ENCODE measurements at regions of chr2 and their contacts with region 1.

Region 1: GRCh38 chr2:113282747-113283533 is 4.2 kb upstream of the PAX8 start:
- DNase-seq: peak; percentile 24
- ATAC-seq: peak; percentile 3; the same call in 1 of the 2 replicates
- H3K4me3 ChIP-seq: no peak overlapping the region
- H3K27ac ChIP-seq: peak overlapping the region; percentile 85
- H3K4me1 ChIP-seq: peaks cover 38% of the 10 kb centered on the region
- H3K27me3 ChIP-seq: no peaks in the 10 kb centered on the region
- CTCF ChIP-seq: peak; percentile 42; the same call in 1 of the 2 replicates

Region 2: GRCh38 chr2:113351375-113352355 is 68.7 kb after region 1 on chr2:
- CTCF ChIA-PET with region 1: no interaction called
- POLR2A ChIA-PET with region 1: no interaction called
- intact Hi-C with region 1: loop called (anchors 10 kb)
- DNase-seq: no peak
- ATAC-seq: no peak
- H3K4me3 ChIP-seq: no peak overlapping the region
- H3K27ac ChIP-seq: no peak overlapping the region
- H3K4me1 ChIP-seq: no peaks in the 10 kb centered on the region
- H3K27me3 ChIP-seq: no peaks in the 10 kb centered on the region
- CTCF ChIP-seq: no peak